Left ventricle myocardium inferior (tissue), 1 donor: ENCODE measurements at regions of chr7 and their contacts with region 1.

Region 1: DNA sequence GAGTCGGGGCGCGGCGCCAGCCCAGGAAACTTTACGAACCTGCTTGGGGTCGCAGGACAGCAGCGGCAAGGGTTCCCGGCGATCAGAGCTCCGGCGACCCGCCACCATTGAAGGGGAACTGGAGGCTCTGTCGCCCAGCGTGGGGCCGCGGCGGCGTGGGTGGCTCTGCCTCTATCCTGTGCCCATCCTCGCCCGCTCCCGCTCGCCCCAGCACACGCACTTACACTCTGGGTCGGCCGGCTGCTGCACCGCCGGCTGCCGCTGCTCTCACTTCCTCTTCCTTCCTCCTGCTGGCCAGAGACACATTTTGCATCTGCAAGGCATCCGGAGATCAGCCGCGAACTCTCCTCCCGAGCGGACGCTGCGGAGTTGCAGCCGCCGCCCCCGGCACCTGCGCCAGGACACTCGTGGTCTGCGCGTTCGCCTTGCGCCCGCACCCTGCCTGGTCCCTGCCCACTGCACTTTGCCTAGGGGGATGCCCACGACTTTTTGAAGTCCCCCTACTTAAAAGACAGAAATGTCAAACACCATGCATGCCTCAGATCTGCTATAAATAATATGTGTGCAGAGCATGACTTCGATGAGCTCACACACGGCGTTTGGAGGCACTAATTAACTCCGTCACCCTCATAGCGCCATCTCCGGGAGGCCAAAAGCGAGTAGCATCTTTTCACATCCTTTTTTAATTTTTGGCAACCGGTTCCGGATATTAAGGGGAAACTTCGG is at the start of gene ELMO1:
- DNase-seq: peak; percentile 80
- H3K4me3 ChIP-seq: peak within 1 kb of the TSS; percentile 88
- H3K27ac ChIP-seq: peak within 1 kb of the TSS; percentile 97
- H3K4me1 ChIP-seq: peaks cover 41% of the 10 kb centered on the region
- H3K27me3 ChIP-seq: peaks cover 58% of the 10 kb centered on the region
- CTCF ChIP-seq: peak; percentile 69
- total RNA-seq, gene ELMO1: 10.0 TPM

Region 2: DNA sequence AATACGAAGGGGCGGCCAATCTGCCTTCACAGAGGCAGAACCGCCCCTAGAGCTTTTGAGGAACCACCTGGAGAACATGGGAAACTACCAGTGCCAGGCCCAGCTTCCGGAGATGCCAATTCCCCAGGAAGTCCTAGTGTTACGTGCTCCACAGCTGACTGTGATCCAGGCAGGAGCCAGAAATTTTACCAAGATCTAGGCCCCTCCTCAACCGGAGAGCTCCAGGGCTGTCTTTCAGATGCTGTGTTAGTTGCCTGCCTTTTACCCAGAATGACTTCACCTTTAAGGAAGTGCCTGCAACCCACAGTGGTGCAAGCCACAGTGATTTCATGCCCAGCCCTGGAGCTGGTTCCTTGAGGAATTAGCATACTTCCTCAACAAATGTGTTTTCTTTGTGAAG is 63.0 kb before region 1 on chr7:
- intact Hi-C with region 1: loop called (anchors 10 kb)
- DNase-seq: no peak
- H3K4me3 ChIP-seq: no peak overlapping the region
- H3K27ac ChIP-seq: no peak overlapping the region
- H3K4me1 ChIP-seq: no peaks in the 10 kb centered on the region
- H3K27me3 ChIP-seq: no peaks in the 10 kb centered on the region
- CTCF ChIP-seq: no peak